CD4-positive, alpha-beta memory T cell (primary cell): ENCODE measurements at regions of chr6 and their contacts with region 1.

Region 1: GRCh38 chr6:16684896-16685554 is 76.2 kb downstream of the ATXN1 start:
- DNase-seq: peak in 4 of 5 donors; percentile 42 to 91 (median 53)
- H3K4me3 ChIP-seq: no peak overlapping the region
- H3K4me3 Mint-ChIP-seq: peak overlapping the region in 2 of 8 donors; percentile 13 to 22
- H3K27ac ChIP-seq: no peak overlapping the region
- H3K27ac Mint-ChIP-seq: peak overlapping the region in 6 of 7 donors; percentile 24 to 74 (median 47)
- H3K4me1 ChIP-seq: peaks cover 62% of the 10 kb centered on the region
- H3K4me1 Mint-ChIP-seq: peaks cover 35 to 70% (median 59%) of the 10 kb centered on the region in 4 donors
- H3K27me3 ChIP-seq: no peaks in the 10 kb centered on the region
- H3K27me3 Mint-ChIP-seq: no peaks in the 10 kb centered on the region

Region 2: DNA sequence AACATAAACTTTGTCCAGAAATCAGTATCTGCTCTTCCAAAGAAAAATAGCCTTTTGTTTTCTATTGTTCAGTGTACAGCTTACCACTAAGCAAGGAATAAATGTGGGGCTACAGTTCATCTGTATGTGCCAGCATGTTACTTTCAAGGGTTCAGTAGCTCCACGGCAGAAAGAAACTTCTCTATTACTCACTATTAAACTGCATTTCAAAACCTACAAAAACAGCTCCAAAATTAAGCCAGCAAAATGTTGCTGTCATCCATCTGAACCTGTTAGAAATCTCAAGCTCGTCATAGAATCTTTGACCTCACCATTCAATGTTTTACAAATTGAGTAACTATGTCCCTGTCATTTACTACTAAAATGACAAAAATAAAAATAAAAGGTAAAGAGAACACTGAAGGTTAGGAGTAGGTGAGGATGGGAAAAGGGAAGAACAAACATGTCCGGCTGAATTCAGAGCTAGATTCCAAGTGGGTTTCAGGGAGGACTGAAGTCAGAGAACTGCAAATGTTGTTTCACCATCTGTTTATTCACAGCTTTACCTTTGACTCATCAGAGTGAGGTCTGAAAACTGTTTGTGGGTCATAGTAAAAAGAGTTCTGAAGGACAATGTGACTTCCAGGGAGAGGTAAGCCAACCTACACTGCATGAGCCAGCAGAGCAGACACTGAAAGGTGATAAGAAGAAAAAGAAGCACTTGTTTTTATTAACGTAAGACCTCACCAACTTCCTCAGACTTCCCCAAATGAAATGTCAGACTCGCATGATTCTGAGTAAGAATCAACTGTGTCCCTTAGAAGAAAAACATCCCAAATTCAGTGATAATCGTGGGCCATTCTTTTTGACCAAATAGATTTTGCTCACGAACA is 14.2 kb after region 1 on chr6:
- CTCF ChIA-PET with region 1: interaction called, 29 read pairs
- POLR2A ChIA-PET with region 1: interaction called, 60 read pairs
- intact Hi-C with region 1: loop called (anchors 1 kb)
- DNase-seq: peak in 2 of 5 donors; percentile 33 to 74
- H3K4me3 ChIP-seq: peak overlapping the region in 1 of 2 donors; percentile 61
- H3K4me3 Mint-ChIP-seq: peak overlapping the region; percentile 86 to 94 (median 92)
- H3K27ac ChIP-seq: peak overlapping the region; percentile 69
- H3K27ac Mint-ChIP-seq: peak overlapping the region; percentile 92 to 97 (median 96)
- H3K4me1 ChIP-seq: peaks cover 78% of the 10 kb centered on the region
- H3K4me1 Mint-ChIP-seq: peaks cover 58 to 83% (median 72%) of the 10 kb centered on the region in 4 donors
- H3K27me3 ChIP-seq: no peaks in the 10 kb centered on the region
- H3K27me3 Mint-ChIP-seq: no peaks in the 10 kb centered on the region